IMR-90 (cell line): ENCODE measurements at regions of chr3 and their contacts with region 1.

Region 1: DNA sequence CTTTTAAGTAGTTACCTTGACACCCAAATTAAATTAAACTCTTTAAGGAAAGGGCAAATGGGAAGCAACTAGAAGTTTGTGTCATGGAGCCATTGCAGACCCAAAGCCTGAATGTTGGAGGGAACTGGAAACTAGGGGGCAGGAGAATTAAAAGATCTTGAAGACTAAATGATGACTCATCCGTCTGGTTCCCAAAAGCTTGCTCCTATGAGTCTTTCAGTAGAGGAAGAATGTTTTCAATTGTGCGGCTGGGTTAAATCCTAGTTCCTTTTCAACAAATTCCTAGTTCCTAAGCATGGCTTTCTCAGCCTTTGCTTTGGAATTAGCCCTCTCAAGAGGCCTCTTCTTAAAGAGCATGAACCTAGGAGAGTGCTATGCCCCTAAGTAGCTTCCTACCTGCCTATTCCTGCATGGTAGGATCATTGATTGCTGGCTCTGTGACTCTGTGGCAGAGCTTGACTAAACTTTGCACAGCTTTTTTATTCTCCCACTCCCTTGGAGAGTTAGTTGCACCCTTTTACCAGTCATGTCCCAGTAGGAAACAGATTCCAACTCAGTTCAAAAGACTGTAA is 17.7 kb downstream of the CLEC3B start:
- DNase-seq: peak; percentile 94
- ATAC-seq: peak; percentile 75
- H3K4me3 ChIP-seq: no peak overlapping the region
- H3K27ac ChIP-seq: peak overlapping the region; percentile 100
- H3K4me1 ChIP-seq: peaks cover 24% of the 10 kb centered on the region
- H3K27me3 ChIP-seq: no peaks in the 10 kb centered on the region
- CTCF ChIP-seq: peak; percentile 54
- POLR2A ChIP-seq: no peak
- RAD21 ChIP-seq: peak; percentile 56

Region 2: GRCh38 chr3:44624749-44625480 is 418.9 kb before region 1 on chr3 and contains the start of gene ZNF197:
- CTCF ChIA-PET with region 1: no interaction called
- POLR2A ChIA-PET with region 1: no interaction called
- dilution Hi-C with region 1: no loop called
- in situ Hi-C with region 1: no loop called
- intact Hi-C with region 1: no loop called
- DNase-seq: peak; percentile 90
- ATAC-seq: peak; percentile 95
- H3K4me3 ChIP-seq: peak within 1 kb of the TSS; percentile 90
- H3K27ac ChIP-seq: peak within 1 kb of the TSS; percentile 80
- H3K4me1 ChIP-seq: no peaks in the 10 kb centered on the region
- H3K27me3 ChIP-seq: no peaks in the 10 kb centered on the region
- CTCF ChIP-seq: 0 out of 2 replicates have a peak, but pooled peaks have one; percentile 4
- POLR2A ChIP-seq: peak; percentile 44; the same call in 1 of the 2 replicates
- RAD21 ChIP-seq: no peak; the same call in 1 of the 2 replicates
- total RNA-seq, gene ZNF197: 14.9 and 18.9 TPM in 2 replicates

Region 3: DNA sequence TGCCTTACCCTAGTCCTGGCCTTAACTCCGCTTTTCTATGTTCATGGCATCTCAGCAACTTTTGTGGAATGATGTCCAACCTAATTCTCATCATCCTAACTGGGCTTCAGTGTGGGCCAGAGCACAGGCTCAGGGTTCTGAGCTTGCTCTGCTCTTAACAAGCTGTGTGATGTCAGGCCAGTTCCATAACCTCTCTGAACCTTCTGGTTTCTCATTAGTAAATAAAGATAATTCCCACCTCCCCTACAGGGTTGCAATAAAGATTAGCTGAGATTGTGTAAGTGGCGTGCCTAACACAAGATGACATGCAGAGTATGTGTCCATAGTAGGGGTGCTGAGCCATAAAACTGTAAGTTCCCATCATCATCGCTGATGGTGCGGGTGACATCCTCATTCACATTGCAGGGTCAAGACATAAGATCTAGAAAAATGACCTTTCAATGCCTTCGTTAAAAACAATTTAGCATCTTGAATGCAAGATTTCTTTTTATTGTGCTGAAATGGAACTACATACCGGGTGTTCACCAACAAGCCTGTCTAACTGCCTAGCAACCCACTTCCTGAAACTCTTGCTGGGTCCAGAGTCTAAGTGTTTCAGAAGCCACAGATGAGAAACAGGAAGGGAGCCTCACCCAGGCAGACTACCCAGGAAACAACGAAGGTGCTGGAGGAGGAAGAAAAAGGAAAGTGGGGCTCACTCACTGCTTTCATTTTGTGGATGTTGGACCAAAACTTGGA is 66.1 kb after region 1 on chr3:
- CTCF ChIA-PET with region 1: no interaction called
- POLR2A ChIA-PET with region 1: no interaction called
- dilution Hi-C with region 1: no loop called
- in situ Hi-C with region 1: no loop called
- intact Hi-C with region 1: no loop called
- DNase-seq: no peak
- ATAC-seq: no peak
- H3K4me3 ChIP-seq: no peak overlapping the region
- H3K27ac ChIP-seq: no peak overlapping the region
- H3K4me1 ChIP-seq: peaks cover 20% of the 10 kb centered on the region
- H3K27me3 ChIP-seq: no peaks in the 10 kb centered on the region
- CTCF ChIP-seq: no peak
- POLR2A ChIP-seq: no peak
- RAD21 ChIP-seq: no peak

Region 4: DNA sequence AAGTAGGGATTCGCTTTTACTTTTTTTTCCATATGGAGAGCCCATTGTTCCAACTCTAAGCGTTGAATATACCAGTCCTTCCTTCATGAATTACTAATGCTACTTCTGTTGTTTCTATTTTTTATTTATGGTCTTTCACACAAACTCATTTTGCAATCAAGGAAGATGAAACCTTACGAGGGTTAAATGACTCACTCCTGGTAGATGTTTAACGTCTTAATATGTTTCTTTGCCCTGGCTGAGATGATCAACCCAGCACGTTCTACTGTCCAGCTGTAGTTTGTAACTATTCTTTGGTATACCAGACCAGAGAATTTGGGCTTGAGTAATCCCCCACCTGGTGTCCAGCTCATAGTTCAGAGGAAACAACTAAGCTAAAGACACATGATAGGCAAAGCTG is 79.2 kb after region 1 on chr3:
- CTCF ChIA-PET with region 1: interaction called, 5 read pairs
- POLR2A ChIA-PET with region 1: interaction called, 3 read pairs
- dilution Hi-C with region 1: no loop called
- in situ Hi-C with region 1: no loop called
- intact Hi-C with region 1: loop called (anchors 5 kb)
- DNase-seq: peak; percentile 98
- ATAC-seq: peak; percentile 68
- H3K4me3 ChIP-seq: no peak overlapping the region
- H3K27ac ChIP-seq: peak overlapping the region; percentile 95; the same call in 1 of the 2 replicates
- H3K4me1 ChIP-seq: peaks cover 42% of the 10 kb centered on the region
- H3K27me3 ChIP-seq: no peaks in the 10 kb centered on the region
- CTCF ChIP-seq: 0 out of 2 replicates have a peak, but pooled peaks have one; percentile 6
- POLR2A ChIP-seq: no peak; the same call in 1 of the 2 replicates
- RAD21 ChIP-seq: peak; percentile 6; the same call in 1 of the 2 replicates

Region 5: DNA sequence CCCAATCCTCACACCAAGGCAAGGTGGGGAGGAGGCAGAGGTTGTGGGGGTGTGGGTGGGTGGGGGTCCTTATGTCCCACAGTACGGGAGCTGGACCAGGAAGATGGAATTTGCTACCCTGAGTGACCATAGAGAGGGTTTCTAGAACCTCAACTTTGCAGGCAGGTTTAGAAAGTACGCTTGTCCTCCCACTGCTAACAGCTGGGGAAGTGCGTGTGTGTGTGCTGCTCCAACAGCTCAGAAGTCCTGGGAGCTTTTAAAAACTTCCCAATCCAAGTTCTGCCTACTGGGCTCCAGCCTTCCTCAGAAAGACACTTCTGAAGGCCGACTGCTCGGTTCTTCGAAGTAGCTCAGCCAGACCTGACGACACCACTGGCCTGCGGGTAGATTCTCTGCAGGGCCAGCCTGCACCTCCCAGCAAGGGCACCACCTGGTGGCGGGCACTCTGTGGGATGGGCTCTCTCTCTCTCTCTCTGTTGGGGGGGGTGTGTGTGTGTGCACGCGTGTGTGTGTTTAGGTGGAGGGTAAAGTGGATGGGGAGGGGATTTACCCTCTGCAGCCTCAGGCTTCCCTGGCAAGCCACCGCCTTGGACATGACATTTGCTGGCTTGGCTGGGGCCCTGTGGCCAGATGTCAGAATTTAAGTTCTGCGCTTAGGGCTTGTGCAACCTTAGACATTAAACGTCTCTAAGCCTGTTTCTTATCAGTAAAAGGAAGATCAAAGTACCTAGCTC is 166.7 kb after region 1 on chr3:
- CTCF ChIA-PET with region 1: interaction called, 23 read pairs
- POLR2A ChIA-PET with region 1: no interaction called
- dilution Hi-C with region 1: no loop called
- in situ Hi-C with region 1: no loop called
- intact Hi-C with region 1: loop called (anchors 1 kb)
- DNase-seq: peak; percentile 80
- ATAC-seq: peak; percentile 94
- H3K4me3 ChIP-seq: no peak overlapping the region
- H3K27ac ChIP-seq: peak overlapping the region; percentile 53
- H3K4me1 ChIP-seq: peaks cover 16% of the 10 kb centered on the region
- H3K27me3 ChIP-seq: no peaks in the 10 kb centered on the region
- CTCF ChIP-seq: peak; percentile 87
- POLR2A ChIP-seq: no peak
- RAD21 ChIP-seq: peak; percentile 92

Region 6: DNA sequence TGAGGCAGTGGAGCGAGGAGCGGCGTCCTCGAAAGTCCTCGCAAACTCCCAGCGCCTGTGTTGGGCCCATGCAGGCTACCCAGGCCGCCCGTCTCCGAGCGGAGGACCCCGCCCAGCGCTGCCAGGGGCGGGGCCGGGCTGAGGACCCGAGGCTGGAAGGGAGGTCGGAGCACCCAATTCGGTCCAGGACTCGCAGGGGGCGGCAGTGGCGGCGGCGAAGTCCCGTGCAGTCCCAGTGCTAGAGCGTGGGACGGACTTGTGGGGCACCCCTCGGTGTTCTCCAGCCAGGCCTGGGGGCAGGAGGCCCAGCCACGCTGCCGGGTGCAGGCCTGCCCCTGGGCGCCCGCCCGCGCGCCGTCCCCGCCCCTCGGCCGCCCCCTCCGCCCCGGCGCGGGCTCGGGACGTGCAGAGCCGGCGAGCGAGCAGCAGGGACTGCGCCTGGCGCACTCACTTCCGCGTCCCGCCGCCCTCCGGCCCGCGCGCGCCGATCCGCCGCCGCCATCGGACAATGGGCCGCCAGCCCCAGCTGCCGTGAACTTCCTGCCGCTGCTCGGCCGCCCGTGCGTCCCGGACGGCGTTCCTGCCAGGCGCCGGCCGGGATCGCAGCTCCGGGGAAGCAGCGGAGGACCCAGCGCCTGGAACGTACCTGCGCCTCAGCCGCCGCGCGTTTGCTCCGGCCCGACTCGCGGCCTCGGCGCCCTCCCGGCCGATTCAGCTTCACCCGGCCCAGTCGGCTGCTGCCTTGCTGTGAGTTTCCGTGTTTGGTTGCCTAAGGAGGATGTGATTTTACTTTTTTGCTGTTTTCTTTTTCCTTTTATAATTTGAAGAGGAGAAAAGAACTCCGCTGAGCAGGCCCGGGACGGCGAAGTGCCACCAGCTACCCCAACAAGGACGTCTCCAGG is 550.1 kb after region 1 on chr3:
- CTCF ChIA-PET with region 1: no interaction called
- POLR2A ChIA-PET with region 1: no interaction called
- dilution Hi-C with region 1: no loop called
- in situ Hi-C with region 1: no loop called
- intact Hi-C with region 1: loop called (anchors 10 kb)
- DNase-seq: peak; percentile 68
- ATAC-seq: peak; percentile 84
- H3K4me3 ChIP-seq: peak overlapping the region; percentile 77
- H3K27ac ChIP-seq: peak overlapping the region; percentile 83
- H3K4me1 ChIP-seq: peaks cover 28% of the 10 kb centered on the region
- H3K27me3 ChIP-seq: no peaks in the 10 kb centered on the region
- CTCF ChIP-seq: no peak
- POLR2A ChIP-seq: peak; percentile 58
- RAD21 ChIP-seq: no peak